WTC11 (cell line): ENCODE measurements at regions of chr11 and their contacts with region 1.

Region 1: GRCh38 chr11:118592616-118593367 is 14.6 kb upstream of the PHLDB1 start:
- DNase-seq: no peak
- ATAC-seq: no peak
- H3K4me3 Mint-ChIP-seq: no peak overlapping the region
- H3K27ac Mint-ChIP-seq: no peak overlapping the region
- H3K4me1 Mint-ChIP-seq: no peaks in the 10 kb centered on the region
- H3K27me3 Mint-ChIP-seq: no peaks in the 10 kb centered on the region
- CTCF ChIP-seq: no peak

Region 2: GRCh38 chr11:118610804-118611795 is 18.3 kb after region 1 on chr11:
- CTCF ChIA-PET with region 1: interaction called, 110 read pairs
- POLR2A ChIA-PET with region 1: no interaction called
- DNase-seq: peak; percentile 95
- ATAC-seq: peak; percentile 41
- H3K4me3 Mint-ChIP-seq: peak overlapping the region; percentile 57
- H3K27ac Mint-ChIP-seq: no peak overlapping the region
- H3K4me1 Mint-ChIP-seq: peaks cover 60% of the 10 kb centered on the region
- H3K27me3 Mint-ChIP-seq: peaks cover 60% of the 10 kb centered on the region
- CTCF ChIP-seq: peak; percentile 87

Region 3: DNA sequence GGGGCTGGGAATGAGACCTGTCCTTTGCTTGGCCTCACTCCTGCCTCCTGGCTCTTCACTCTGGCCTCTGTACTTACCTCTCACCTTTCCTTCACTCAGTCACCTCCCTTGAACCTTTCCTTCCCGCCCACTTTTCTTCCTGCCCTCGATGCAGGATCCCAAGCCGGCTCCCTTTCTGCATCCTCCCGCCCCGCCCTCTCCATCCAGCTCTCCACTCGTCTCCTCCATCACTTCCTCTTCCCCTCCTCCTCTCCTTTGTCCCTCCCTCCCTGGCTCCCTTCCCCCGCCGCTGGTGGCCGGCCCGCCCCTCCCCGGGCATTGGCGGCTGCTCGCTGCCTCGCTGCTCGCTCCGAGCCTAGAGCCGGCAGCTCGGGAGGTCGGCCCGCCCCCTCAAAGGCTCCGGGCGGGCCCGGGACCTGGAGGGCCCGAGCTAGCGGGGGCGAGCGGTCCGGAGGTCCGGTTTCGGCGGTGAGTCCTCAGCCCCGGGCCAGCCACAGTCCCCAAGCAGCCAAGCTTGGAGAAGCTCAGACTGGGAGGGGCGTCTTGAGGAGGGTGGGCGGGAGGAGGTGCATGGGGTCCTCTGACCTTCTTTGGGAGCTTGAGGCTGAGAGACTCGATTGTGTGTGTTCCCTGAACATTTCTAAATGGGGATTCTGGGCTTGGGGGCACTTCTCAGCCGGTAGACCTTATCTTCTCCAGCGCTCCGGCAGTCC is 28.4 kb after region 1 on chr11:
- CTCF ChIA-PET with region 1: interaction called, 10 read pairs
- POLR2A ChIA-PET with region 1: no interaction called
- DNase-seq: peak; percentile 90
- ATAC-seq: peak; percentile 87
- H3K4me3 Mint-ChIP-seq: peak overlapping the region; percentile 85
- H3K27ac Mint-ChIP-seq: peak overlapping the region; percentile 86
- H3K4me1 Mint-ChIP-seq: peaks cover 60% of the 10 kb centered on the region
- H3K27me3 Mint-ChIP-seq: no peaks in the 10 kb centered on the region
- CTCF ChIP-seq: no peak

Region 4: GRCh38 chr11:118634431-118635236 is 41.8 kb after region 1 on chr11:
- CTCF ChIA-PET with region 1: interaction called, 39 read pairs
- POLR2A ChIA-PET with region 1: interaction called, 4 read pairs
- DNase-seq: peak; percentile 93
- ATAC-seq: peak; percentile 90
- H3K4me3 Mint-ChIP-seq: peak overlapping the region; percentile 73
- H3K27ac Mint-ChIP-seq: peak overlapping the region; percentile 93
- H3K4me1 Mint-ChIP-seq: peaks cover 29% of the 10 kb centered on the region
- H3K27me3 Mint-ChIP-seq: no peaks in the 10 kb centered on the region
- CTCF ChIP-seq: no peak

Region 5: GRCh38 chr11:118640332-118641154 is 47.8 kb after region 1 on chr11:
- CTCF ChIA-PET with region 1: interaction called, 39 read pairs
- POLR2A ChIA-PET with region 1: interaction called, 7 read pairs
- DNase-seq: no peak
- ATAC-seq: no peak
- H3K4me3 Mint-ChIP-seq: no peak overlapping the region
- H3K27ac Mint-ChIP-seq: no peak overlapping the region
- H3K4me1 Mint-ChIP-seq: peaks cover 9% of the 10 kb centered on the region
- H3K27me3 Mint-ChIP-seq: no peaks in the 10 kb centered on the region
- CTCF ChIP-seq: no peak